Activated CD4-positive, alpha-beta memory T cell treated with anti-CD3 and anti-CD28 coated beads for 36 hours (primary cell): ENCODE measurements at regions of chr19 and their contacts with region 1.

Region 1: GRCh38 chr19:45643024-45643926 is 4.1 kb upstream of the EML2 start:
- DNase-seq: peak; percentile 97
- H3K4me3 Mint-ChIP-seq: peak overlapping the region; percentile 71
- H3K27ac Mint-ChIP-seq: peak overlapping the region; percentile 97
- H3K4me1 Mint-ChIP-seq: peaks cover 52% of the 10 kb centered on the region
- H3K27me3 Mint-ChIP-seq: no peaks in the 10 kb centered on the region

Region 2: GRCh38 chr19:45469132-45469944 is 173.9 kb before region 1 on chr19:
- CTCF ChIA-PET with region 1: interaction called, 12 read pairs
- POLR2A ChIA-PET with region 1: interaction called, 7 read pairs
- intact Hi-C with region 1: no loop called
- DNase-seq: peak; percentile 96
- H3K4me3 Mint-ChIP-seq: peak overlapping the region; percentile 87
- H3K27ac Mint-ChIP-seq: peak overlapping the region; percentile 84
- H3K4me1 Mint-ChIP-seq: peaks cover 33% of the 10 kb centered on the region
- H3K27me3 Mint-ChIP-seq: peaks cover 1% of the 10 kb centered on the region

Region 3: DNA sequence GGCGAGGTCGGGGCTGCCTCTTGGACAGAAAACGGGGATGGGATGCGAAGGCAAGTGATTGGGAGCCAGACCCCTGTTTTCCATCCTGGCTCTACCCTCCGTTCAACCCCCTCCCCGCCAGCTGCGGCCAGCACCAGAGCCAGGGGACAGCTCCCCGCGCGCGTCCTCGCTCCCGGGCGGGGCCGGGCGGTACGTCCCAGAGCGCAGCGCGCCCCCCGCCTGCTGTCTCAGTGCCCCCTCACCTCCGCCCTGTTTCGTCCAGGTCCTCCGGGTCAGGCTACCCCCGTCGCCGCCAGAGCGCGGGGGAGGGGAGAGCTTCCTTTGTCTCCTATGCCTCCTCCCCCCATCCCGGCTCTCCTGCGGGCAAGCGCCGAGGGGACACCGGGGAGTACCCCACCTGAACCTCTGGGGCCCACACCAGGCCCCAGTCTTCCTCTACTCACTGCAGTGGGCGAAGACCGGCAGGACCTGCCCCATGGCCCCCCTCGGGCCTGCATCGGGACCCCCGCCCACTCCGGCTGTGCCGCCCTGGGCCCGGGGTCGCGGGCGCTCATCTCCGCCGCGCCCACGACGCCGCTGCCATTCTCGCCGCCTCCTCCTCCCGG is 146.8 kb before region 1 on chr19:
- CTCF ChIA-PET with region 1: interaction called, 13 read pairs
- POLR2A ChIA-PET with region 1: interaction called, 3 read pairs
- intact Hi-C with region 1: no loop called
- DNase-seq: peak; percentile 60
- H3K4me3 Mint-ChIP-seq: peak overlapping the region; percentile 50
- H3K27ac Mint-ChIP-seq: no peak overlapping the region
- H3K4me1 Mint-ChIP-seq: peaks cover 33% of the 10 kb centered on the region
- H3K27me3 Mint-ChIP-seq: peaks cover 25% of the 10 kb centered on the region

Region 4: GRCh38 chr19:45558399-45558878 is 84.8 kb before region 1 on chr19:
- CTCF ChIA-PET with region 1: interaction called, 22 read pairs
- POLR2A ChIA-PET with region 1: no interaction called
- intact Hi-C with region 1: no loop called
- DNase-seq: peak; percentile 81
- H3K4me3 Mint-ChIP-seq: no peak overlapping the region
- H3K27ac Mint-ChIP-seq: no peak overlapping the region
- H3K4me1 Mint-ChIP-seq: peaks cover 17% of the 10 kb centered on the region
- H3K27me3 Mint-ChIP-seq: no peaks in the 10 kb centered on the region

Region 5: DNA sequence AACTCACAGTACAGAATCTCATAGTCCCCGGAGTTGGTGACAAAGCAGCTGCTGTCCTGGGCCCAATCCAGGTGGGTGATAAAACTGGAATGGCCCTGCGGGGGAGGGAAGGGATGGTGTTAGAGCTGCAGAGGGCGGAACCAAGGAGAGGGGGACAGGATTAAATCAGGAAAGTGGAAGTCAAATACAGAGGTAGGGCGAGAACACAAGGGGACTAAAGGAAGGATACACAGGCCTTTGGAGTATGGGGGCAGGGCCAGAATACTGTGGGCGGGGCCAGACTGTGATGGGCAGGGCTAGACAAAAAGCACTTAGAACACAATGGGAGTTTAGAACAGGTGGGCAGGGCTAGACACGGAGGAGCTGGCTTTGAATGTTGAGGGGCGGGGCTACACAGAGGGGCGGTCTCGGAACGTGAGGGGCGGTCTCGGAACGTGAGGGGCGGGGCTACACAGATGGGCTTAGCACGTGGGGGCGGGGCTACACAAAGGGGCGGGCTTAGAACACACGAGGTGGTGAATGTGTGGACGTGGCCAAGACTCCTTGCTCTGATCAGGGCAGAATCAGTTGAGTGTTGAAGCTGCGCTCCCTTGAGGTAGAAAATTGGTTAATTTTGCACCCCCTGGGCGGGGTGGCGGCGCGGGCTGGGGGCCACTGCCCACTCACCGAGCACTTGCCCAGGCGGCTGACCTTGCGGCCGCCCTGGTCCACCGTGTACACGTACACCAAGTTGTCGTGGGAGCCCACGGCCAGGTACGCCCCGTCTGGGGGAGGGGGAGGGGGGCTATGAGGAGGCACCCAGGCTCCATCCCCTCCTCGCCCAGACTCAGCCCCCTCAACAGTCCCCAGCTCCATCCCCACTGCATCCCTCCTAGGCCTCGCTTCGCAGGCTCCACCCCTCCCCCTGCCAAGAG is 27.2 kb before region 1 on chr19:
- CTCF ChIA-PET with region 1: interaction called, 58 read pairs
- POLR2A ChIA-PET with region 1: interaction called, 54 read pairs
- intact Hi-C with region 1: loop called (anchors 1 kb)
- DNase-seq: peak; percentile 94
- H3K4me3 Mint-ChIP-seq: no peak overlapping the region
- H3K27ac Mint-ChIP-seq: peak overlapping the region; percentile 67
- H3K4me1 Mint-ChIP-seq: peaks cover 28% of the 10 kb centered on the region
- H3K27me3 Mint-ChIP-seq: no peaks in the 10 kb centered on the region

Region 6: GRCh38 chr19:45681391-45682015 is 38.2 kb after region 1 on chr19:
- CTCF ChIA-PET with region 1: interaction called, 11 read pairs
- POLR2A ChIA-PET with region 1: interaction called, 3 read pairs
- intact Hi-C with region 1: loop called (anchors 1 kb)
- DNase-seq: peak; percentile 93
- H3K4me3 Mint-ChIP-seq: peak overlapping the region; percentile 73
- H3K27ac Mint-ChIP-seq: no peak overlapping the region
- H3K4me1 Mint-ChIP-seq: peaks cover 19% of the 10 kb centered on the region
- H3K27me3 Mint-ChIP-seq: no peaks in the 10 kb centered on the region